ENCODE measurements at regions of chr19 and their contacts with region 1.

Region 1: GRCh38 chr19:17576759-17577473 is 21.5 kb downstream of the COLGALT1 start:
- DNase-seq: no peak
- H3K4me3 ChIP-seq: no peak overlapping the region
- H3K27me3 ChIP-seq: no peaks in the 10 kb centered on the region
- CTCF ChIP-seq: no peak

Region 2: DNA sequence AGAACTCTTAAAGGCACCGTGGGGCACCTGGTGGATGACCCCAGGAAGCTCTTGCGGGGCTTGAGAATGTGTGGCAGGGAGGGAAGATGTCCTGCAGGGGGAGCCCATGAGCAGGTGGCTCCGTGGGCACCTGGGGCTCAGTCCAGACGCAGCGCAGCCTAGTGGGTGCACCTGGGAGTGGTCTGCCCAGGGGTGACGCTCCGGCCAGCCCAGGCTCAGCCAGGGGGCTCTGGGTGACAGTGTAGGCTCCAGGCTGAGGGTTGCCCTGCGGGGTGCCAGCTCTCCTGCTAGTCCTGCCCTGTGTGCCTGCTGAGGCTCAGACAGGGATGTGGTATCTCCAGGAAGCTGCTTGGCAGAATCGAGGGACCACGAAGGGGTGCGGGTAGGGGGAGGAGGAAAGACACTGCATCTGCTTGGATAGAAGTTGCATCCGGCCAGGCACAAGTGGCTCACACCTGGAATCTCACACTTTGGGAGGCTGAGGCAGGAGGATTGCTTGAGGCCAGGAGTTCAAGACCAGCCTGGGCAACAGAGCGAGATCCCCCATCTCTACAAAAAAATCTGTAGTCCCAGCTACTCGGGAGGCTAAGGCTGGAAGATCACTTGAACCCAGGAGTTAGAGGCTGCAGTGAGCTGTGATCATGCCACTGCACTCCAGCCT is 80.4 kb before region 1 on chr19:
- CTCF ChIA-PET with region 1: interaction called, 11 read pairs
- POLR2A ChIA-PET with region 1: no interaction called
- DNase-seq: no peak
- H3K4me3 ChIP-seq: no peak overlapping the region
- H3K27me3 ChIP-seq: no peaks in the 10 kb centered on the region
- CTCF ChIP-seq: peak; percentile 91

Region 3: GRCh38 chr19:17555929-17556813 is 20.7 kb before region 1 on chr19:
- CTCF ChIA-PET with region 1: interaction called, 14 read pairs
- POLR2A ChIA-PET with region 1: interaction called, 3 read pairs
- DNase-seq: no peak
- H3K4me3 ChIP-seq: peak overlapping the region; percentile 97
- H3K27me3 ChIP-seq: no peaks in the 10 kb centered on the region
- CTCF ChIP-seq: peak; percentile 22; the same call in 1 of the 2 replicates

Region 4: DNA sequence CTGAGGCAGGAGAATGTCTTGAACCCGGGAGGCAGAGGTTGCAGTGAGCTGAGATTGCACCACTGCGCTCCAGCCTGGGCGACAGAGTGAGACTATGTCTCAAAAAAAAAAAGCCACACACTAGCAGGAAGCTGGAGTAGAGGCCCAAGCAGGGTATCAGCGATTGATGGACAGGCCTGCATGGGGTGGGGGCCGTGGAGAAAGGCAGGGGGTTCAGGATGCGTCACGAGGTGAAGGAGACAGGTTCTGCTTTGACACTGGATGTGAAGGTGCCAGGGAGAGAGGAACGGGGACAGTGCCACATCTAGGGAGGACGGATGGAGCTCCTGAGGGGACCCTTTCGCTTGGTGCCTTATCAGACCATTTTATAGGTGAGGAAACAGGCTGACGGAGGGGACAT is 14.4 kb before region 1 on chr19:
- CTCF ChIA-PET with region 1: interaction called, 14 read pairs
- POLR2A ChIA-PET with region 1: no interaction called
- DNase-seq: no peak
- H3K4me3 ChIP-seq: no peak overlapping the region
- H3K27me3 ChIP-seq: no peaks in the 10 kb centered on the region
- CTCF ChIP-seq: no peak

Measured in BJ (cell line).